ENCODE measurements at regions of chr12 and their contacts with region 1.

Region 1: DNA sequence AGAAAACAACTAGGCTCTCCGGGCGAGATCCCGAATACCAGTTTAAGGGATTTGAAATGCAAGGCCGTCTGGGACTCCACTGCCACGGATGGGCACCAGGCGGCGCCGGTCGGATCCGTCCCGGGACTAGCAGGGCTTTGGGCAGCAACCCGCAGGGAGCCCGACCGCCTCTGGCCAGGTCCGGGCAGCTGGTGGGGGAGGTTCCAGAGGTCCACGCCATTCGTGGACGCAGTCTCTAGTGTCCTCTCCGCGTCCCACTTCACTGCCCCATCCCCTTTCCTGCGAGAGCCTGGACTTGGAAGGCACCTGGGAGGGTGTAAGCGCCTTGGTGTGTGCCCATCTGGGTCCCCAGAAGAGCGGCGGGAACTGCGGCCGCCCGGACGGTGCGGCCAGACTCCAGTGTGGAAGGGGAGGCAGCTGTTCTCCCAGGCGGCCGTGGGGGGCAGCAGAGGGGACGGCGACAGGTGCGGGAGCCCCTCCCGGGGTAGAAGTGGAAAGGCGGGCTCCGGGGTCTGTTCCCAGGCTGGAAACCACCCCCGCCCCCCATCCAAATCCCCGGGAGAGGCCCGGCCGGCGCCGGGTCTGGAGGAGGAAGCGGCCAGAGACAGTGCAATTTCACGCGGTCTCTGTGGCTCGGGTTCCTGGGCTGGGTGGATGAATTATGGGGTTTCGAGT is 838 bp upstream of the ERBB3 start:
- DNase-seq: peak; percentile 81
- ATAC-seq: peak; percentile 61
- H3K4me3 ChIP-seq: peak overlapping the region; percentile 89 to 96 (median 91)
- H3K27ac ChIP-seq: peak overlapping the region; percentile 99
- H3K4me1 ChIP-seq: peaks cover 49% of the 10 kb centered on the region
- H3K27me3 ChIP-seq: no peaks in the 10 kb centered on the region; a peak in 1 of 5 replicates
- CTCF ChIP-seq: peak; percentile 83
- EP300 ChIP-seq: 0 out of 4 replicates have a peak, but pooled peaks of 1 of the 2 experiments have one; percentile 22
- POLR2A ChIP-seq: peak; percentile 67 to 73; a peak in 3 of 4 replicates
- RAD21 ChIP-seq: peak; percentile 80

Region 2: DNA sequence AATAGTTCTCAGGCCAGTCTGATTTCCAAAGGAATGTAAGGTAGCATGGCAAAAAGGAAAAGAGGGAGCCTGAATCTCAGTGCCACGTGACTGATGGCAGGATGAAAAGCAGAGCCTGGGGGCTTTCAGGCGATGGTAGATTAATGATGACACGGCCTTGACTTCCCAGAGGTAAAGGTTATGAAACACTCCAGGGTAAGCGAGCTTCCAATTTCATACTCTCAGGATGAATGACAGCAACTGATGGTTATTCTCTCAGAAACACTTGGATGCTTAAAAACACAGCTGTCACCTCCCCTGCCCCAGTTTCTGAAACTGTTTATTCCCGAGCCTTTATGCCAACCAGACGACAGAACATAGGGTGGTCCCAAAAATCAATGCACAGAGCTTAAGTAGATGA is 307.4 kb before region 1 on chr12:
- CTCF ChIA-PET with region 1: no interaction called
- POLR2A ChIA-PET with region 1: no interaction called
- in situ Hi-C with region 1: no loop called
- intact Hi-C with region 1: no loop called
- DNase-seq: no peak
- ATAC-seq: no peak
- H3K4me3 ChIP-seq: no peak overlapping the region
- H3K27ac ChIP-seq: no peak overlapping the region
- H3K4me1 ChIP-seq: no peaks in the 10 kb centered on the region
- H3K27me3 ChIP-seq: no peaks in the 10 kb centered on the region
- CTCF ChIP-seq: no peak
- EP300 ChIP-seq: no peak
- POLR2A ChIP-seq: no peak
- RAD21 ChIP-seq: no peak

Region 3: GRCh38 chr12:55955800-55956508 is 123.2 kb before region 1 on chr12:
- CTCF ChIA-PET with region 1: no interaction called
- POLR2A ChIA-PET with region 1: no interaction called
- in situ Hi-C with region 1: no loop called
- intact Hi-C with region 1: no loop called
- DNase-seq: peak; percentile 48
- ATAC-seq: peak; percentile 78
- H3K4me3 ChIP-seq: no peak overlapping the region
- H3K27ac ChIP-seq: no peak overlapping the region
- H3K4me1 ChIP-seq: peaks cover 12% of the 10 kb centered on the region
- H3K27me3 ChIP-seq: no peaks in the 10 kb centered on the region
- CTCF ChIP-seq: peak; percentile 44; the same call in 1 of the 2 replicates
- EP300 ChIP-seq: no peak
- POLR2A ChIP-seq: no peak
- RAD21 ChIP-seq: no peak

Region 4: GRCh38 chr12:56098592-56098991 is 19.5 kb after region 1 on chr12:
- CTCF ChIA-PET with region 1: no interaction called
- POLR2A ChIA-PET with region 1: interaction called, 279 read pairs
- in situ Hi-C with region 1: no loop called
- intact Hi-C with region 1: no loop called
- DNase-seq: no peak
- ATAC-seq: no peak
- H3K4me3 ChIP-seq: no peak overlapping the region
- H3K27ac ChIP-seq: no peak overlapping the region
- H3K4me1 ChIP-seq: peaks cover 8% of the 10 kb centered on the region
- H3K27me3 ChIP-seq: no peaks in the 10 kb centered on the region
- CTCF ChIP-seq: no peak
- EP300 ChIP-seq: no peak
- POLR2A ChIP-seq: no peak
- RAD21 ChIP-seq: no peak

Region 5: DNA sequence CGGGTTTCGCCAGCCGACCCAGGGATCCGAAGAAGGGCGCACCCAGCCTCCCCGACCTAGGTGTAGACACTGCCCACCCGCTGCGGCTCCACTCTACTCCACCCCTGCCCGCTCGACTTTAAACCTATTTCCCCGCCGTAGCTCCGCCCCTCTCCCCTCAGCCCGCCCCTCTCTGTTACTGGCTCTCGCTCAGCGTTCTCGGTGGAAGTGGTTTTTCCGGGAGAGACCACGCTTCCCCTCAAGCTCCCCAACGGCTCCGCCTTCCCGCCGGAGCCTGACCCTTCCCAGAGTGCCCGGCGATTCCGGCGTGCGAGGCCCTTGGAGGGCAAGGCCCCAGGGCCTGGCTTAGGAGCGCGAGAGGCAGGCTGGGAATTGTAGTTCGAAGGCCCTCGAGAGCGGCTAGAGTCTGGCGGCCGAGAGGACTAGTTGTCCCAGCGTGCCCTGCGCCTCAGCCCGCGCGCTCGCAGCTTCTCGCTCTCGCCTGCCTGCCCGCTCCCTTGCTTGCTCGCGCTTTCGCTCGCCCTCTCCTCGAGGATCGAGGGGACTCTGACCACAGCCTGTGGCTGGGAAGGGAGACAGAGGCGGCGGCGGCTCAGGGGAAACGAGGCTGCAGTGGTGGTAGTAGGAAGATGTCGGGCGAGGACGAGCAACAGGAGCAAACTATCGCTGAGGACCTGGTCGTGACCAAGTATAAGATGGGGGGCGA is 25.1 kb after region 1 on chr12 and contains the start of gene PA2G4:
- CTCF ChIA-PET with region 1: interaction called, 4 read pairs
- POLR2A ChIA-PET with region 1: interaction called, 279 read pairs
- in situ Hi-C with region 1: no loop called
- intact Hi-C with region 1: loop called (anchors 1 kb)
- DNase-seq: peak; percentile 97
- ATAC-seq: peak; percentile 94
- H3K4me3 ChIP-seq: peak within 1 kb of the TSS; percentile 50 to 85 (median 74)
- H3K27ac ChIP-seq: peak within 1 kb of the TSS; percentile 76
- H3K4me1 ChIP-seq: peaks cover 35% of the 10 kb centered on the region
- H3K27me3 ChIP-seq: no peaks in the 10 kb centered on the region
- CTCF ChIP-seq: 0 out of 2 replicates have a peak, but pooled peaks have one; percentile 10
- EP300 ChIP-seq: peak in 1 of 2 experiments; percentile 21; a peak in 2 of 4 replicates
- POLR2A ChIP-seq: peak; percentile 91
- RAD21 ChIP-seq: no peak
- total RNA-seq, gene PA2G4: 240 and 281 TPM in 2 replicates

Region 6: GRCh38 chr12:56178347-56178746 is 99.2 kb after region 1 on chr12:
- CTCF ChIA-PET with region 1: no interaction called
- POLR2A ChIA-PET with region 1: no interaction called
- in situ Hi-C with region 1: no loop called
- intact Hi-C with region 1: no loop called
- DNase-seq: no peak
- ATAC-seq: no peak; the same call in 2 of the 3 replicates
- H3K4me3 ChIP-seq: no peak overlapping the region
- H3K27ac ChIP-seq: no peak overlapping the region
- H3K4me1 ChIP-seq: no peaks in the 10 kb centered on the region
- H3K27me3 ChIP-seq: no peaks in the 10 kb centered on the region; a peak in 1 of 5 replicates
- CTCF ChIP-seq: no peak
- EP300 ChIP-seq: no peak
- POLR2A ChIP-seq: no peak
- RAD21 ChIP-seq: no peak

Region 7: GRCh38 chr12:56374726-56375597 is 295.8 kb after region 1 on chr12:
- CTCF ChIA-PET with region 1: no interaction called
- POLR2A ChIA-PET with region 1: no interaction called
- in situ Hi-C with region 1: no loop called
- intact Hi-C with region 1: no loop called
- DNase-seq: peak; percentile 62
- ATAC-seq: peak; percentile 69
- H3K4me3 ChIP-seq: no peak overlapping the region
- H3K27ac ChIP-seq: peak overlapping the region; percentile 4
- H3K4me1 ChIP-seq: peaks cover 45% of the 10 kb centered on the region
- H3K27me3 ChIP-seq: no peaks in the 10 kb centered on the region
- CTCF ChIP-seq: no peak
- EP300 ChIP-seq: no peak
- POLR2A ChIP-seq: no peak
- RAD21 ChIP-seq: no peak